ENCODE measurements at regions of chr3 and their contacts with region 1.

Region 1: DNA sequence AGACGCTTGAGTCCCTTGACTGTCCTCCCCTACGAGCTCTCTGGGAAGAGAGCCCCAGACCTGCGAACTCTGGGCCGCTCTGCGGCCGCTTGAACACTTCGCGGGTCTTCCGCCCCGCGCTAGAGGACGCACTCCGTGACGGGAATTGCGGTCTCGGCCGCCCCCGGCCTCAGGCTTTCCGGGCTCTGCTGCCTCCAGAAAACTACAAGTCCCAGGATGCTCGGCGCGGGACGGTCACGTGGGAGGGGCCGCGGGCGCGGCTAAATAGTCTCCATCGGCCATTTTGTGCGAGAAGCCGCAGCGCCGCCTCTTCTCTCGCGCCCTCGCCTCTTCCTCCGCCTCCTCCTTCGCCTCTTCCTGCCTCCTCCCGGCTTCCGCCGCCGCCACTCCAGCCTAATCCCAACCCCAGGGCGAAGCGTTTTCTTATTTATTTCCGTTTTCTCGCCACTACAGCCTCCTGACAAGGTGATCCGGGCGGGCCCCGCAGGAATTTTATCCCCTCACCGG is at the start of gene EIF1B:
- DNase-seq: peak; percentile 98
- ATAC-seq: peak; percentile 87
- H3K4me3 ChIP-seq: peak within 1 kb of the TSS; percentile 77 to 98 (median 90)
- H3K4me3 Mint-ChIP-seq: peak within 1 kb of the TSS; percentile 96
- H3K27ac ChIP-seq: peak within 1 kb of the TSS; percentile 96 to 97
- H3K27ac Mint-ChIP-seq: peak within 1 kb of the TSS; percentile 99
- H3K4me1 ChIP-seq: peaks cover 15 to 20% of the 10 kb centered on the region in 2 donors
- H3K4me1 Mint-ChIP-seq: peaks cover 34% of the 10 kb centered on the region
- H3K27me3 ChIP-seq: no peaks in the 10 kb centered on the region
- H3K27me3 Mint-ChIP-seq: no peaks in the 10 kb centered on the region
- CTCF ChIP-seq: peak; percentile 90
- total RNA-seq, gene EIF1B: 70.6 and 78.1 TPM in 2 replicates

Region 2: DNA sequence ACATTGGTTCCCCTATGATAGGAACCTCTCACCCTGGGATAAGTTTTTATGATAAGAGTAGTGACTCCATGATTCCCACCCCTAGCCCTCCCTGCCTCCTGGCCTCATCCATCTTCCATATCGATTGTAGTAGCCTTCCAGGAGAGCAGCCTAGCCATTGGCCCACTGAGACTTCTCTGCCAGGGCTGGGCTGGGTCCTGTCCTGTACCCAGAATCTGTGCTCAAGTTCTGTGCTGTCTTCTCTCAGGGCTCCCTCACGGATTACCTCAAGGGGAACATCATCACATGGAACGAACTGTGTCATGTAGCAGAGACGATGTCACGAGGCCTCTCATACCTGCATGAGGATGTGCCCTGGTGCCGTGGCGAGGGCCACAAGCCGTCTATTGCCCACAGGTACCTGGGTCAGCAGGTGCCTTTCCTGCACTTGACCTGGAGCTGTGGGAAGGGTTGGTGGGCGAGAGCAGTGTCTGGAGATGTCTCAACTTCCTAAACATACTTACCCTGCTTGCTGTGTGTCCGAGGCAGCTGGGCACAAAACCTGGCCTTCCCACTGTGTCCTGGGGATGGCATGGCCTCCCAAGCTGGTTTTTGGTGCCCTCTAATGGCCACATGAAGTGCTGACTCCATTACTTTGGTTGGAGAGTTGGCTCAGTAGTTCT is 1829.9 kb before region 1 on chr3:
- CTCF ChIA-PET with region 1: no interaction called
- POLR2A ChIA-PET with region 1: no interaction called
- intact Hi-C with region 1: no loop called
- DNase-seq: peak; percentile 57
- ATAC-seq: peak; percentile 65
- H3K4me3 ChIP-seq: no peak overlapping the region
- H3K4me3 Mint-ChIP-seq: no peak overlapping the region
- H3K27ac ChIP-seq: no peak overlapping the region
- H3K27ac Mint-ChIP-seq: no peak overlapping the region
- H3K4me1 ChIP-seq: no peaks in the 10 kb centered on the region
- H3K4me1 Mint-ChIP-seq: no peaks in the 10 kb centered on the region
- H3K27me3 ChIP-seq: no peaks in the 10 kb centered on the region
- H3K27me3 Mint-ChIP-seq: no peaks in the 10 kb centered on the region
- CTCF ChIP-seq: peak; percentile 77

Region 3: GRCh38 chr3:40057077-40057476 is 252.4 kb before region 1 on chr3:
- CTCF ChIA-PET with region 1: no interaction called
- POLR2A ChIA-PET with region 1: no interaction called
- intact Hi-C with region 1: no loop called
- DNase-seq: no peak
- ATAC-seq: no peak
- H3K4me3 ChIP-seq: no peak overlapping the region
- H3K4me3 Mint-ChIP-seq: no peak overlapping the region
- H3K27ac ChIP-seq: no peak overlapping the region
- H3K27ac Mint-ChIP-seq: no peak overlapping the region
- H3K4me1 ChIP-seq: no peaks in the 10 kb centered on the region
- H3K4me1 Mint-ChIP-seq: no peaks in the 10 kb centered on the region
- H3K27me3 ChIP-seq: no peaks in the 10 kb centered on the region
- H3K27me3 Mint-ChIP-seq: peaks cover 9% of the 10 kb centered on the region
- CTCF ChIP-seq: no peak

Region 4: GRCh38 chr3:40329071-40329470 is 19.6 kb after region 1 on chr3:
- CTCF ChIA-PET with region 1: interaction called, 13 read pairs
- POLR2A ChIA-PET with region 1: no interaction called
- intact Hi-C with region 1: no loop called
- DNase-seq: no peak
- ATAC-seq: no peak
- H3K4me3 ChIP-seq: no peak overlapping the region
- H3K4me3 Mint-ChIP-seq: no peak overlapping the region
- H3K27ac ChIP-seq: no peak overlapping the region
- H3K27ac Mint-ChIP-seq: no peak overlapping the region
- H3K4me1 ChIP-seq: peaks cover 0 to 5% of the 10 kb centered on the region in 2 donors
- H3K4me1 Mint-ChIP-seq: peaks cover 3% of the 10 kb centered on the region
- H3K27me3 ChIP-seq: no peaks in the 10 kb centered on the region
- H3K27me3 Mint-ChIP-seq: peaks cover 7% of the 10 kb centered on the region
- CTCF ChIP-seq: no peak

Region 5: GRCh38 chr3:40476478-40477470 is 167.3 kb after region 1 on chr3 and contains the start of gene ZNF619:
- CTCF ChIA-PET with region 1: interaction called, 5 read pairs
- POLR2A ChIA-PET with region 1: no interaction called
- intact Hi-C with region 1: loop called (anchors 1 kb)
- DNase-seq: peak; percentile 84
- ATAC-seq: peak; percentile 93
- H3K4me3 ChIP-seq: peak within 1 kb of the TSS; percentile 64 to 92 (median 82)
- H3K4me3 Mint-ChIP-seq: peak within 1 kb of the TSS; percentile 91
- H3K27ac ChIP-seq: peak within 1 kb of the TSS; percentile 72 to 90
- H3K27ac Mint-ChIP-seq: peak within 1 kb of the TSS; percentile 92
- H3K4me1 ChIP-seq: peaks cover 13 to 19% of the 10 kb centered on the region in 2 donors
- H3K4me1 Mint-ChIP-seq: peaks cover 25% of the 10 kb centered on the region
- H3K27me3 ChIP-seq: no peaks in the 10 kb centered on the region
- H3K27me3 Mint-ChIP-seq: no peaks in the 10 kb centered on the region
- CTCF ChIP-seq: no peak
- total RNA-seq, gene ZNF619: 22.8 and 27.6 TPM in 2 replicates

Region 6: DNA sequence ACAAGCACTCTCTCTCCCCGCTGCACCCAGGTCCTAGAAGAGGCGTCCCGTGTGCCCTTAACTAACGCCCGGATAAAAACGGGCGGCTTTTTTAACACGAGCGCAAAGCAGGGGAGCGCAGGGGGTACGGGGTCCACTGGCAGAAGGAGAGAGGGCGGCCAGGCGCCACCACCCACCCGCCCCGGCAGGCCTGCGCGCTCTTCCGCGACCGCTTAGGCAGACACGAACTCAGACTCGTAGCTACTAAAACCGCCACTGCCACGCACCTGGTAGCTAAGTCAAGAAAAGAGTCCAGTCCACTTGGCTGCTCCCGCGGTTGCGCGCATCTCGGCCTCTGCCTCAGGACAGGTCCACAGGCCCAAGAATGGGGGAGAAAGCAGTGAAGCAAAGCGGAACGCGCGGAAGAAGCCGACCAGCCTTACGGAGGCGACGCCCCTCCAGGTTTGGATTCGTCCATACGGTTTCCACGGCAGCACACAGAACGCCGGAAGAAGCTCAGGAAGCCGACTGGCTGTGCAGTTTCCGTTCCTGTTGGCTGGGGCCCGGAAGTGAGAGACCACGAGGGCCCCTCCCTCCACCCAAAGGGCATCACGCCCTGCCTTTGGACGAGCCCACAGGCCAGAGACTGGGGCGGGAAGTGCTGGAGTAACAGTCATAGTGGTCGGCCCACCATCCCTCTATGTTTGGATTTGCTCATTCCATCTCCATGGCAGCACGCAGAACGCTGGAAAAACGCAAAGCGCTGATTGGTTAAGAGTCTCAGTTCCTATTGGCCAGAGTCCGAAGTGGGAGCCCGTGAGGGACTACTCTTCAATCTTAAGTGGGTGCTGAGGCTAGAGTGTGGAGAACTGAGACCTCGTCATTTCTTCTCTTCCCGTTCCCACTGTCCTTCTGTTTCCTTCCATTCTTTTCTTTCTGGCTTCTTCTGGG is 1652.5 kb after region 1 on chr3 and contains the start of gene ULK4:
- CTCF ChIA-PET with region 1: no interaction called
- POLR2A ChIA-PET with region 1: no interaction called
- intact Hi-C with region 1: loop called (anchors 1 kb)
- DNase-seq: peak; percentile 99
- ATAC-seq: peak; percentile 87
- H3K4me3 ChIP-seq: peak within 1 kb of the TSS; percentile 75 to 92 (median 88)
- H3K4me3 Mint-ChIP-seq: peak within 1 kb of the TSS; percentile 98
- H3K27ac ChIP-seq: peak within 1 kb of the TSS; percentile 90 to 99
- H3K27ac Mint-ChIP-seq: peak within 1 kb of the TSS; percentile 99
- H3K4me1 ChIP-seq: peaks cover 10 to 16% of the 10 kb centered on the region in 2 donors
- H3K4me1 Mint-ChIP-seq: peaks cover 19% of the 10 kb centered on the region
- H3K27me3 ChIP-seq: no peaks in the 10 kb centered on the region
- H3K27me3 Mint-ChIP-seq: no peaks in the 10 kb centered on the region
- CTCF ChIP-seq: no peak
- total RNA-seq, gene ULK4: 27.2 and 33.7 TPM in 2 replicates